ENCODE measurements at regions of chr3 and their contacts with region 1.

Region 1: DNA sequence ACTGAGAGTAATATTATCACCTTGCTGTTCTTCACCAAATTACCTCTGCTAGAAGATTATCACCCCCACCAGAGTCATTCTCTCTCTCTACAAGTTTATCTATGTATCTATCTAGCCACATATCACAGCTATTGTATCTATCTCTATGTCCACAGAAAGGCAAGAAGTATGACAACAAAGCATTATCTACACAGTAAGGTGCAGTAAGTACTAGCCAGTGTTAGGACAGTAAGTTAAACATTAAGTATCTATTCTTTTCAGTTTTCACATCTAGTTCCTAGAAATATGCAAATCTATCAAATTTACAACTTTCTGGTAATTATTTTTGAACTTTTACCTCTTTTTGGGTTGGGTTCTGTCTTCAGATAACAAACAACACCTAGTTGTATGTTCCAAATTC is 26.5 kb upstream of the XXYLT1 start:
- DNase-seq: no peak
- ATAC-seq: no peak
- H3K4me3 ChIP-seq: no peak overlapping the region
- H3K27ac ChIP-seq: no peak overlapping the region
- H3K4me1 ChIP-seq: no peaks in the 10 kb centered on the region
- H3K27me3 ChIP-seq: no peaks in the 10 kb centered on the region
- CTCF ChIP-seq: no peak

Region 2: GRCh38 chr3:195238586-195239118 is 58.8 kb before region 1 on chr3:
- intact Hi-C with region 1: no loop called
- DNase-seq: peak in 1 of 2 donors; percentile 24
- ATAC-seq: peak; percentile 11 to 90 (median 78)
- H3K4me3 ChIP-seq: no peak overlapping the region
- H3K27ac ChIP-seq: peak overlapping the region in 6 of 10 donors; percentile 13 to 64 (median 42)
- H3K4me1 ChIP-seq: peaks cover 0 to 31% (median 20%) of the 10 kb centered on the region in 9 donors
- H3K27me3 ChIP-seq: no peaks in the 10 kb centered on the region
- CTCF ChIP-seq: no peak

Region 3: DNA sequence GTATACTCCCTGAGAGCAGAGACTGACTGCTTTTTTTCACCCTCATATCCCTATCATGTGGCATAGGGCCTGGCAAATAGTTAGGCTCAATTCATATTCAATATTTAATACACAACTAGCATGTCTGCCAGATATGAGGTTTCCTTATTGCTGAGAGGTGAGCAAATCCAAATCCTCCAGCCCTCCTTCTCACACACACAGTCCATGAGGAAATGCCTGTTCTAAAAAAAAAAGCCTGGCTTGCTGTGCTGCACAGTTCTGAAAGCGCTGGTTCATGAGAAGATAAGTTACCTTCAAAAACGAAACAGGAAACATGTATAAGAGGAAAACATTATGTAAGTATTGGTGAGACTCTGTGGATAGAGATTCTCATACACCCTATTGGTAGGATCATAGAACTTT is 160.9 kb after region 1 on chr3:
- intact Hi-C with region 1: loop called in 1 of 10 experiments (anchors 10 kb)
- DNase-seq: no peak
- ATAC-seq: peak in 4 of 8 donors; percentile 20 to 52 (median 34)
- H3K4me3 ChIP-seq: no peak overlapping the region
- H3K27ac ChIP-seq: peak overlapping the region in 1 of 10 donors; percentile 68
- H3K4me1 ChIP-seq: peaks cover 0 to 15% (median 0%) of the 10 kb centered on the region in 9 donors
- H3K27me3 ChIP-seq: no peaks in the 10 kb centered on the region
- CTCF ChIP-seq: no peak